Activated CD4-positive, alpha-beta T cell treated with anti-CD3 and anti-CD28 coated beads, Interleukin-2, amount 10 ng/mL, durations not matched to agents 24 days and 14 days (primary cell): ENCODE measurements at regions of chrX and their contacts with region 1.

Region 1: DNA sequence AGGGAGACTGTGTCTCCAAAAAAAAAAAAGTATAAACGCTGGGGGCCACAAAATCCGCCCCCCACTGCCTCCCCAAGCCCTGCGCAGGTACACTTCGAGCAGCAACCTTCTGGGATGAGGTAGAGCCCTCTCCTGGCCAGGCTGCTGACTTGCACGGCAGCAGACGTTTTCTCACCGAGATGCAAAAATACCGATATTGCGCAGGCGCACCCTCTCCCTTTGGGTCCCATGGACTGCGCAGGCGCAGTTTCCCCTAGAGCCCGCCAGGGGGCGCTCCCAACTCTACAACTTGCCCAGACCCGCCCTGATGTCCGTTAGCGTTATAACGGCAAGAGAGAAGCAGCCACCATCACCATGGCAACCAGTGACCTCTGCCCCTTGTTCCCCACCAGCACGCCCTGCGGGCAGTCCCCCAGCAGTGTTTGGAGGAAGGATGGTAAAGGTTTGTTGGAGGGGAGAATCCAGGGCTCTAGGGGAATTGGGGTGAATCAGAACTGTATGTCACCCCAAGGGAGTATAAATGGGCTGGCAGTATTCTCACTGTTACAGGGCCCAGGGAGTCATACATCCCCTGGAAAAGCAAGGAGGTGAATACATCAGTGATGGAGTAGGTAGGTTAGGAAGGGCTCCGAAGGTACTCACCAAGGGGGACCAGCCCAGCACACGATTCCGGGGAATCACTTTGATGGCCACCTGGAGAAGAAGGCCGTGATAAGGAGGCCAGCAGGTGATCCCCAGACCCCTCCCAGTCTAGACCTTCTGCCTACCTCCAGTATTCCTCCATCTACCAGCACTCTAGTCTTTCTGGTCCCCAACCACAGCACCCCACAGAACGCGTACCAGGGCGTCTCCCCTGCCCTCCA is 1.5 kb downstream of the PIM2 start:
- DNase-seq: peak; percentile 96
- H3K4me3 Mint-ChIP-seq: peak overlapping the region; percentile 96
- H3K27ac Mint-ChIP-seq: peak overlapping the region; percentile 95
- H3K4me1 Mint-ChIP-seq: peaks cover 32% of the 10 kb centered on the region
- H3K27me3 Mint-ChIP-seq: no peaks in the 10 kb centered on the region

Region 2: DNA sequence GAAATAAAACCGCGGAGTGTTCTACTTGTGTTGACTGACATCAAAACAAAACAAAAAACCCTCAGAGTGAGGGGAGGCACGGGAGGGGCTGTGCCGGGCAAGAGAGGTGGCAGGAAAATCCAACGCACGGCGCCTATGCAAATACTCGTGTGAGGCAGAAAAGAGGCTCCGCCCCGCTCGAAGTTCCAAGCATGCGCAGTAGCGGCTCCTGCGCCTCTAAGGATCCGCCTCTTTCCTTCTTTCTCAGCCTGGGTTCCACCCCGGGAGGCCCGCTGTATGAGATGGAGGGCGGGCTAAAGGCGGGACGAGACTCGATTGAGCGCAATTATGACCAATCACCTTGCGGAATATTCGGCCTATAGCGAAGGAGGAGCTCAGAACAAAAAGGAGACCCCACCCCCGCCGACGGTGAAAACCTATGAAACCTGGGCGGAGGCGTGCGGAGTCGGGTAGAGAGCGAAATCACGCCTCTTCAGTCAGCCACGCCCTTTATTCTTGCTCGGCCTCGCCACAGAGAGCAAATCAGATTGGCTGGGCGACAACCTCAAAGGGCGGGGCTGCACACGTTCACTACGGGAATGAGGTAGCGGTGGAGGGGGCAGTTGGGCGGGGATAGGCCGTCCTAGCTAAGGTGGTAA is 1699.6 kb before region 1 on chrX:
- intact Hi-C with region 1: loop called (anchors 5 kb)
- DNase-seq: peak; percentile 98
- H3K4me3 Mint-ChIP-seq: peak overlapping the region; percentile 92
- H3K27ac Mint-ChIP-seq: peak overlapping the region; percentile 99
- H3K4me1 Mint-ChIP-seq: peaks cover 37% of the 10 kb centered on the region
- H3K27me3 Mint-ChIP-seq: no peaks in the 10 kb centered on the region

Region 3: DNA sequence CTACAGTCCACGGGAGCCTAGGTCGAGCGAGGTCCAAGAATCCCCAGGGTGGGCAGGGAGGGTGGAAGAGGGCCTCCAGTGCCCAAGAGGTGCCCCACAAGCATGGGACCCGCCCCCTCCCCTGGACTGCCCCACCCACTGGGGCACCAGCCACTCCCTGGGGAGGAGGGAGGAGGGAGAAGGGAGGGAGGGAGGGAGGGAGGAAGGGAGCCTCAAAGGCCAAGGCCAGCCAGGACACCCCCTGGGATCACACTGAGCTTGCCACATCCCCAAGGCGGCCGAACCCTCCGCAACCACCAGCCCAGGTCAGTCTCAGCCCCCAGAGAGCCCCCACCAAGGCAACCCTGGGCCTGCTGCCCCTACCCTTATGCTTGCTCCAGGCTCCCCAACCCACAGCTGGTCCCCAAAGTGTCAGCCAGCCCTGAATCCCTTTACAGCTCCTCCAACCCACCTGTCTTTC is 131.0 kb before region 1 on chrX and contains the start of gene GATA1:
- intact Hi-C with region 1: no loop called
- DNase-seq: no peak
- H3K4me3 Mint-ChIP-seq: no peak within 1 kb of the TSS
- H3K27ac Mint-ChIP-seq: no peak within 1 kb of the TSS
- H3K4me1 Mint-ChIP-seq: peaks cover 11% of the 10 kb centered on the region
- H3K27me3 Mint-ChIP-seq: peaks cover 13% of the 10 kb centered on the region
- total RNA-seq, gene GATA1: not detected in 2 replicates

Region 4: GRCh38 chrX:48897621-48898306 is 19.6 kb before region 1 on chrX and contains the starts of genes PQBP1 and TIMM17B:
- intact Hi-C with region 1: loop called (anchors 1 kb)
- DNase-seq: peak; percentile 96
- H3K4me3 Mint-ChIP-seq: peak within 1 kb of the TSS; percentile 83
- H3K27ac Mint-ChIP-seq: peak within 1 kb of the TSS; percentile 95
- H3K4me1 Mint-ChIP-seq: peaks cover 16% of the 10 kb centered on the region
- H3K27me3 Mint-ChIP-seq: no peaks in the 10 kb centered on the region
- total RNA-seq, gene PQBP1: 104 and 114 TPM in 2 replicates
- total RNA-seq, gene TIMM17B: 72.0 and 75.1 TPM in 2 replicates

Region 5: DNA sequence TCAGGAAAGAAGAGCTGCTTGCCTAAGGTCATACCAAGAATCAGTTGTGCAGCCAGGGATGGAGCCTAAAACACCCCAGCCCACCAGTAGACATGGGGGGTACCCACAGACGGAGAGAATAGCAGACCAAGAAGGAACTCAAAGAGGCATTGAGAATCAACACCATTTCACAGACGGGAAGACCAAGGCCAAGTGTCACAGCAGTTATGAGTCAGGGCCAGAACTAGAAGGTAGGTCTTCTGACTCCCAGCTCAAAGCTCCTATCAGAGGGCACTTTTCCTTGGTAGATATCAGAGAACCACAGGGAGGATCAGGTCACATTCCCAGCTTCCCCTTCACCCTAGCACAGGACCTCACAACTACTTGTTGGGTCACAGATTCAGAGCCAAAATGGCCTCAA is 25.5 kb after region 1 on chrX:
- intact Hi-C with region 1: loop called (anchors 1 kb)
- DNase-seq: no peak
- H3K4me3 Mint-ChIP-seq: peak overlapping the region; percentile 76
- H3K27ac Mint-ChIP-seq: peak overlapping the region; percentile 89
- H3K4me1 Mint-ChIP-seq: peaks cover 57% of the 10 kb centered on the region
- H3K27me3 Mint-ChIP-seq: no peaks in the 10 kb centered on the region

Region 6: DNA sequence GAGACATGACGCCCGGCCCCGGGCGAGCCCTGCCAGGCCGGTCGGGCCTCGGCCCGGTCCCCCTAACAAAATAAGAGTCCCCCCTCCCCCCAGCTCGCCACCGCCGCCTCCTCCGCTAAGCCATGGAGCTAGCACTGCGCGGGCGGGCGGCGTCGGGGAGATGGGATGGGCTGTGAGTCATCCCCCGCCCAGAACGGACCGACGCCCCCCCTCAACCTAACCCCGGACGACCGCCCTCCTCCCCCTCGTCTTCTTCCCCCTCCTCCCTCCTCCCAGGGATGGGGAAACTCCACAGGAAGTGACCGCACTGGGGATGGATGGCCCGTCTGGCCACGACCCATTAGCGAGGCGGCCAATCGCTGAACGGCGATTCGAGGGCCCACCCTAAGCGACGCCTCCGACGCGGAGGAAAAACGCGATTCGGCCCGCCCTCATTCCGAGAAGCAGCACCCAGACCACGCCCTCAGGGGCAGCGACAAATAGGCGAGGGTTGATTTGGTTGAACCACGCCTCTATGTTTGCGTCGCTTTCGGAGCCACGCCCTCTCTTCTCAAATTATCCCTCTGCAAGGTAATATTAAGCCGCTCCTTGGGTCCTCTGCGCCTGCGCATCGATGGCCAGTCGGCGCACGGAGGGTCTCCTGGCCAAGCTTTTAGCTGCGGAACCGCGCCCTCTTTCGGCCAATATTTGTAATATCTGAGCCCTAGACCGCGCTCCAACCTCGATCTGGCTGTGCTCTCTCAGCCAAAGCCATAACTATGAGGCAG is 126.0 kb after region 1 on chrX and contains the start of gene TFE3:
- intact Hi-C with region 1: loop called (anchors 5 kb)
- DNase-seq: peak; percentile 98
- H3K4me3 Mint-ChIP-seq: peak within 1 kb of the TSS; percentile 88
- H3K27ac Mint-ChIP-seq: peak within 1 kb of the TSS; percentile 95
- H3K4me1 Mint-ChIP-seq: peaks cover 31% of the 10 kb centered on the region
- H3K27me3 Mint-ChIP-seq: no peaks in the 10 kb centered on the region
- total RNA-seq, gene TFE3: 28.8 and 30.8 TPM in 2 replicates